Activated CD4-positive, alpha-beta T cell treated with anti-CD3 and anti-CD28 coated beads, Interleukin-2, amount 10 ng/mL, durations not matched to agents 7 days and 5 days (primary cell): ENCODE measurements at regions of chr5 and their contacts with region 1.

Region 1: DNA sequence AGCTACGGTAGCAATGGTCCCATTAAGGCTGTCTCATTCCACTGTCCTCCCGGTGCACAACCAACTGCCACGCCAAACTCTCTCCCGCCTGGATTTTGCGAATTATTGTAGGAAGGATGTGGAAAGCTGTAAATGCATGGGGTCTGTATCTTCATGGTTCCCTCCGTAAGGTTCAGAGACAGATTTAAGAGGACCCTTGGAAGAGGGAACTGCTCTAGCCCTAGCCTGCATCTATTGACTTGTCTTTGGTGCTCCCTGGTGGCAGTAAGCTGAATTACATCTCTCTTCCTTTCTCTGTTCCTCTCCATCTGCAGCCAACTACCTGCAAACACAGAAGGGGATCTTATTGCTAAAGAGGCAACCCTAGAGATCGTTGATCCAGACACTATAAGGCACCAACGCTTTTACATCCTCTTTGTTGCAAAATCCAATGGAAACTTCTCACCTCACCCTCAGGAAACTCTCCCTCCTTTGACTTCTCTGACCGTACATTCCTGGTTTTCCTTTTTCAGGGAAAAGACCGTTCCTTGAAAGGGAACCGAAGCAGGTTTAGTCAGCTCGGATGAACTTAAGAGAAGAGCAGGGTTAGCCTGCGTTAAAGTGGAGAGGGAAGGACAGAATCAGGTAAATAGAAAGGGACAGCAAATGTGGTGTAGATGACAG is 11.9 kb downstream of the CAPSL start:
- DNase-seq: peak; percentile 80
- H3K4me3 Mint-ChIP-seq: peak overlapping the region; percentile 52
- H3K27ac Mint-ChIP-seq: no peak overlapping the region
- H3K4me1 Mint-ChIP-seq: peaks cover 36% of the 10 kb centered on the region
- H3K27me3 Mint-ChIP-seq: peaks cover 3% of the 10 kb centered on the region

Region 2: DNA sequence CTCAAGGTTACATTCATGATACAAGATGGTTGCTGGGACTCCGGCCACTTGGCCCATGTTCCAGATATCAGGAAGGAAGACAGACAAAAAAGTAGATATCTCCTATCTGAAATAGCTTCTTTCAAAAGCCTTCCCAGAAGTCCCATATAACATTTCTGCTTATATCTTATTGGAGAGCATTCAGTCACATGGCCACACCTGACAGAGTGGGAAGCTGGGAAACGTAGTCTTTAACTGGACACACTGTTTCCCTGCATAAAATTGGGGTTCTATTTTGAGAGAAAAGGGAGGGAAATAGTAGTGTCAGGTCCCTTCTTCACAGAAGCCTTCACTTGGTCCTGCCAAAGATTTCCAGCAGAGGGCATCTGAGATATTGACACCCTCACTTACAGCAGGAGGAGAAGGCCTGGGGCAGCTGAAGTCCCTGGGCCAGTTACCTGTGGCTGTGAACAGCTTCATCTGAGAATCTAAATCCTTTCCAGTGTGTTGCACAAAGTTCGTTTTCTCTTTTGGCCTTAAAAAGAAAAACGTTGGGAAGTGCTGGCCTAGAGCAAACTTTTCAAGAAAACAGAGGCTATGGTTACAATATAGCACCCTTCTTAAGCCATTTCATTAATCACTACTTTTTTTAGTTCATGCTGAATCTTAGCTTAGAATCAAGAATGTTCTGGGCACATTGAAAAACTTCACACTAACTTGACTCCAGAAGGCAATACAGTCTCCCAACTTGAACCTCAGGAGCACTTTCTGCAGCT is 275.3 kb before region 1 on chr5:
- CTCF ChIA-PET with region 1: interaction called, 44 read pairs
- POLR2A ChIA-PET with region 1: interaction called, 6 read pairs
- DNase-seq: peak; percentile 76
- H3K4me3 Mint-ChIP-seq: no peak overlapping the region
- H3K27ac Mint-ChIP-seq: peak overlapping the region; percentile 27
- H3K4me1 Mint-ChIP-seq: peaks cover 19% of the 10 kb centered on the region
- H3K27me3 Mint-ChIP-seq: no peaks in the 10 kb centered on the region

Region 3: GRCh38 chr5:35657877-35658276 is 268.6 kb before region 1 on chr5:
- CTCF ChIA-PET with region 1: interaction called, 44 read pairs
- POLR2A ChIA-PET with region 1: no interaction called
- DNase-seq: no peak
- H3K4me3 Mint-ChIP-seq: no peak overlapping the region
- H3K27ac Mint-ChIP-seq: no peak overlapping the region
- H3K4me1 Mint-ChIP-seq: peaks cover 30% of the 10 kb centered on the region
- H3K27me3 Mint-ChIP-seq: no peaks in the 10 kb centered on the region

Region 4: DNA sequence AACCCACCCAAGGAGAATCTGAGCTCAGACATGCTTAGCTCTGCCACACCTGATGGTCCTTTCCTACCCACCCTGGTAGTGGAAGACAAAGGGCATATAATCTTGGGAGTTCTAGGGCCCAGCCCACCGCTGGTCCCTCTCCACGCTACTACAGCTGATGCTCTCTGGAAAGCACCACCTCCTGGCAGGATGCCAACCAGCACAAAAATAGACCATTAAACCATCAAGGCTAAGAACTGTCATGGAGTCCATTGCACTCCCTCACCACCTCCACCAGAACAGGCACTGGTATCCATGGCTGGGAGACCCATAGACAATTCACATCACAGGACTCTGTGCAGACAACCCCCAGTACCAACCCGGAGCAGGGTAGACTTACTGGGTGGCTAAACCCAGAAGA is 180.9 kb before region 1 on chr5:
- CTCF ChIA-PET with region 1: no interaction called
- POLR2A ChIA-PET with region 1: no interaction called
- DNase-seq: no peak
- H3K4me3 Mint-ChIP-seq: no peak overlapping the region
- H3K27ac Mint-ChIP-seq: no peak overlapping the region
- H3K4me1 Mint-ChIP-seq: peaks cover 38% of the 10 kb centered on the region
- H3K27me3 Mint-ChIP-seq: no peaks in the 10 kb centered on the region